Esophagus muscularis mucosa (tissue), 4 donors: ENCODE measurements at regions of chr17 and their contacts with region 1.

Region 1: DNA sequence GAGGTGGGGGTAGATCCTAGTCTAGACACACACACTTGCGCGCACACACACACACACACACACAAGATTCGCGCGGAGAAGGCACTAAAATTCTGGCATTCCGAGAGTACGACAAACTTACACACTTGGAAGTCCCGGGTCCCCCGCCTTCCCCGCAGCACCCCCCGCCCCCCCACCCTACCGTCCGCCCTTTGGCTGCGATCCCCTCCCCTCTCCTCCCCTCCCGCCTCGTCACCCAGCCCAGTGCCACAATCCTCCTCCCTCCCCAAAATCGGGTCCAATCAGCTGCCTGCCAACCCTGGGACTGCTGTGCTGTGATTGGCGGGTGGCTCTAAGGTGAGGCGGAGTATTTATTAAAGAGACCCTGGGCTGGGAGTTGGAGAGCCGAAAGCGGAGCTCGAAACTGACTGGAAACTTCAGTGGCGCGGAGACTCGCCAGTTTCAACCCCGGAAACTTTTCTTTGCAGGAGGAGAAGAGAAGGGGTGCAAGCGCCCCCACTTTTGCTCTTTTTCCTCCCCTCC is at the start of gene SOX9:
- DNase-seq: no peak
- H3K4me3 ChIP-seq: peak within 1 kb of the TSS; percentile 49 to 65 (median 53)
- H3K27ac ChIP-seq: peak within 1 kb of the TSS in 3 of 4 donors; percentile 42 to 69 (median 65)
- H3K4me1 ChIP-seq: peaks cover 25 to 72% (median 67%) of the 10 kb centered on the region in 4 donors
- H3K27me3 ChIP-seq: peaks cover 9 to 98% (median 56%) of the 10 kb centered on the region in 4 donors
- CTCF ChIP-seq: no peak
- EP300 ChIP-seq: no peak
- POLR2A ChIP-seq: no peak
- total RNA-seq, gene SOX9: 1.4 to 3.7 (median 1.9) TPM

Region 2: DNA sequence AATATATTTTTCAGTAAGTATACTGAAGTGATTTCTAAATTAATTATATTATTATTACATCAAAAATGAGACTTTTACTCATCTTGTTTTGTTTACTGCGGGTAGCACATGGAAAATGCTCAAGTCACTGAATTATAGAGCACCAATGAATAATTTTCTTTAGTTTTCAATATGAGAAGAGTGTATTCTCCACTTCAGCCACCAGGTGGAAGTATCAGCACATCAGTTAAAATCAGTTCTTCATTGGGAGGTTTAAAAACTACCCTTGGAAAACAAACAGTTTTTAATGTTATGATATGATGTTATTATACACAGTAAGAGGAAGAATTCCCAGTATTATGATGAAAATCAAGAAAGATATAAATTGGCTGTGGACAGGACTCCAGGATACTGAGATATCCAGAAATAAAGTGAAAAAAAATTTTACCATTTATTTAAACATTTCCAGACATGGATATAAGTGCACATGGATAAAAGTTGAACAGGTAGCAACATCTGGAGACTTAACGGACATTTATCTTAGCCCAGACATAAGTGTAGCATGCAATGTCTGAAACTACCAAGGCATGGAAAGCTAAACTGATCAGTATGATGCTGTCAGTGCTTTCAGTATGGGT is 1484.1 kb before region 1 on chr17:
- intact Hi-C with region 1: loop called (anchors 10 kb)
- DNase-seq: no peak
- H3K4me3 ChIP-seq: no peak overlapping the region
- H3K27ac ChIP-seq: no peak overlapping the region
- H3K4me1 ChIP-seq: no peaks in the 10 kb centered on the region
- H3K27me3 ChIP-seq: peaks cover 0 to 4% (median 0%) of the 10 kb centered on the region in 4 donors
- CTCF ChIP-seq: peak; percentile 66 to 84 (median 73)
- EP300 ChIP-seq: no peak
- POLR2A ChIP-seq: no peak

Region 3: DNA sequence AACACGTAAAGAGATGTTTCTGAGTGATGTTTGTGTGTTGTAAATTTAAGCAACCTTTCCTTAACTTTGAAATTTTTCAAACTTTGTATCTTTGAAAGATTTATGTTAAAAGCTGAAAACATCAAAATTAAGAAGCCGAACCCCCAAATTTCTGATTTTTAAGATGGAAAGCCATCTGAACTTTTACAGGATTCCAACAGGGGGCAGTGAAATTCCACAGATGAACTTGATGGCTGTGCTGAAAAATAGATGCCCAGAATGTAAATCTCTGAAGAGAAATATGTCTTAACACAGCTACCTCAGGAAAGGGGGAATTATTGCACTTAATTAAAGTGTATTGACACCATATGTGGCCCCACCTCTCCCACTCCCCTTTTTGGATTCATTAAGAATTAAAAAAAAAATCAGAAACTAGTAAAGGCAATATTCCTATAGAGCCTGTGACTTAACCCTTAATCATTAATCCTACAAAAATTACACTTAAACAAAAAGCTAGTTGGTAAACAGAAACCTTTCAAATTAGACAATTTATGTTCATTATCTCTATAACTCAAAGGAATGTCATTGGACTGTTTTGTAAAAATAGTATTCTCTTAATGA is 1353.5 kb before region 1 on chr17:
- intact Hi-C with region 1: loop called (anchors 10 kb)
- DNase-seq: no peak
- H3K4me3 ChIP-seq: no peak overlapping the region
- H3K27ac ChIP-seq: no peak overlapping the region
- H3K4me1 ChIP-seq: no peaks in the 10 kb centered on the region
- H3K27me3 ChIP-seq: no peaks in the 10 kb centered on the region
- CTCF ChIP-seq: peak; percentile 41 to 63 (median 48)
- EP300 ChIP-seq: no peak
- POLR2A ChIP-seq: no peak

Region 4: GRCh38 chr17:71472809-71473789 is 647.6 kb before region 1 on chr17:
- intact Hi-C with region 1: loop called (anchors 5 kb)
- DNase-seq: no peak
- H3K4me3 ChIP-seq: no peak overlapping the region
- H3K27ac ChIP-seq: no peak overlapping the region
- H3K4me1 ChIP-seq: no peaks in the 10 kb centered on the region
- H3K27me3 ChIP-seq: peaks cover 0 to 8% (median 0%) of the 10 kb centered on the region in 4 donors
- CTCF ChIP-seq: peak; percentile 41 to 58 (median 49)
- EP300 ChIP-seq: no peak
- POLR2A ChIP-seq: no peak

Region 5: DNA sequence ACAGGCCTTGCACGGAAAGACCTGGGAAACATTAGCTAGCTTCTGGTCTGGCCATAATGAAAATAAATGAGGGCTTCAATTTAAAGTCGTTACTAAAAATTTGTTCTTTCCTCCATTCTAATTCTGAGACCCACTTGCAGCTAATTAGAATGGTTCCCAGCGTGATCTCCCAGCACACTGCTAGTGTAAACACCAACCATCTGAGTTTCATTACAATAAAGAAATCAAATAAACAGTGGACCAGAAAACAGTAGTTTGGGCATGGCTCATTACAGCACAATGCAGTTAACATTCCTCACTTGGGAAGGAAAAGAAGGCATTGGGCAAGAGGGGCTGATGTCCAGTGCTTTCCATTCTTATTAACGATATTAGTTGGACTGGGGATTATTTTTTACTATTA is 410.8 kb before region 1 on chr17:
- intact Hi-C with region 1: loop called (anchors 10 kb)
- DNase-seq: no peak
- H3K4me3 ChIP-seq: no peak overlapping the region
- H3K27ac ChIP-seq: no peak overlapping the region
- H3K4me1 ChIP-seq: no peaks in the 10 kb centered on the region
- H3K27me3 ChIP-seq: no peaks in the 10 kb centered on the region
- CTCF ChIP-seq: no peak
- EP300 ChIP-seq: no peak
- POLR2A ChIP-seq: no peak

Region 6: DNA sequence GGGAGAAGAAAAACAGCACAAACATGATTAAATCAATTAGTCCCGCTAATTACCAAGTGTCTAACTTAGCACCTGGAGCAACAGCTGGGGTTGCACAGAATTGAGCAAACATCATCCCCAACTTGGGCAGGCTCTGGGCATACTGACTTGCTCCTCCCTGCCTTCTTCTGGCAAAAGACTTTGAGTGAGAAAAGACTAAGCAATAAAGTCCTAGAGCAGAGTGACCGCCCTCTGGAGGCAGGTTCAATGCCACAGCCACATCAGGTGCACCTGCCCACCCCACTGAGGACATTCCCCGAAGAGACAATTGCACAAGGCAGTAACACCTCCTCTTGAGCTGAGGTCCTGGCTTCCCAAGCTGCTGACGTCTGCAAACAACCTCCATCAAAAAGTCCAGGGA is 358.4 kb after region 1 on chr17:
- intact Hi-C with region 1: no loop called
- DNase-seq: no peak
- H3K4me3 ChIP-seq: no peak overlapping the region
- H3K27ac ChIP-seq: no peak overlapping the region
- H3K4me1 ChIP-seq: no peaks in the 10 kb centered on the region
- H3K27me3 ChIP-seq: peaks cover 0 to 37% (median 0%) of the 10 kb centered on the region in 4 donors
- CTCF ChIP-seq: no peak
- EP300 ChIP-seq: no peak
- POLR2A ChIP-seq: no peak

Region 7: DNA sequence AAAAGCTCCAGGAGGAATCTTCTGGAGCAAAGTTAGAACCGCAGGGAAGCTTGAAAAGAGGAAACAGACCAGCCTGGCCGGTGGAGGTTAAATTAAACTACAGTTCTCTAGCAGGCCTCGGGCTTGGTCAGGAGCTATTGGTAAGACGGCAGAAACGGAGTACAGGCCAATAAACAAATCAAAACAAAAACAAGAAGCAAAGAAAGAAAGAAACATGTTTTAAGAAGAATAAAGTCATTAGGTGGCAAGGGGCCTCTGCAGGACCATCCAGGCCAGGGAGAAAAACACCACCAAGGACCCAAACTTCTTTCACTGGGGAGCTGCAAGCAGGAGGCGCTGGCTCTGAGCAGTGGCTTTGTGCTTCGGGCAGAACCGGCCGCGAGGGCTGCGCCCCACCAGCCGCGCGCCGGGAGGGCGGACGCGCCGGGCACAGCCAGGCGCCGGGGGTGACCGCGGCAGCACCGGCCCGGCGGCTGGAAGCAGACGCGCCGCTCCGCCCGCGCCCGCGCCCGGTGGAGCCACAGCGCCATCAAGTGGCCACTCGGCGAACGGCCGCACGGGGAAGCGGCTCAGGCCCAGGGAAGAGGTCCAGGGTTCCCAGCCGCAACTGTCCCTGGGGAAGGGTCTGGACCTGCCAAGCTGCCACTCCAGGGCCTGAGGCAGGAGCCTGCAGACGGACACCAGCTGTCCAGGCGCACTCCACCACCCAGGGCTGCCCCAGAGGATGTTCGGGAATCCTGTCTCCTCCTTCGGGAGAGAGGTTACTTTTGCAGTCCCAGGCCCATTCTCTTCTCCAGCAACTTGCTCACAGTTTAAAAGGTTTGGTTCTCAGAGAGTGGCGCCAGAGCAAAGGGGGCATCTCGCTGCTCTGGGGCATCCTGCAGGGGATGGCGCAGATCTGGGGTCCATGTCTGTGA is 419.5 kb after region 1 on chr17:
- intact Hi-C with region 1: loop called (anchors 10 kb)
- DNase-seq: no peak
- H3K4me3 ChIP-seq: peak overlapping the region in 3 of 4 donors; percentile 25 to 32 (median 26)
- H3K27ac ChIP-seq: no peak overlapping the region
- H3K4me1 ChIP-seq: peaks cover 4 to 14% (median 12%) of the 10 kb centered on the region in 4 donors
- H3K27me3 ChIP-seq: peaks cover 0 to 19% (median 0%) of the 10 kb centered on the region in 4 donors
- CTCF ChIP-seq: peak; percentile 78 to 94 (median 92)
- EP300 ChIP-seq: no peak
- POLR2A ChIP-seq: no peak